H1 (cell line): ENCODE measurements at regions of chr7 and their contacts with region 1.

Region 1: DNA sequence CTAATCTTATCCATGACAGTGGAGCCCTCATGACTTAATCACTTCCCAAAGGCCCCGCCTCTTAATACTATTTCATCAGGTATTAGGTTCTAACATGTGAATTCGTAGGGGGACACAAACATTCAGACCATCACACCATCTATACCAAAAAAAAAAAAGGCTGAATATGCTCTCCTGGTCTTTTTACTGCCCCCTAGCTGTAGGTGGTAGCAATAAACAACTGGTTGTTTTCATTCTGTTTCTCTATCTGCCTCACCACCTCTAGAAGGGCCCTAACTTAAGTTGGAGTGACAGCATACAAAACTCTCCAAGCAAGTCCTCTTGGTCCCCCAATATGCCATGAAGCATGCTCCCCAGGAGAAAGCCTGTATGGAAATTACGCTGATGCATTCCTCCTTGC is 94.1 kb downstream of the GRM8 start:
- DNase-seq: no peak
- H3K4me3 ChIP-seq: no peak overlapping the region
- H3K27ac ChIP-seq: no peak overlapping the region
- H3K4me1 ChIP-seq: no peaks in the 10 kb centered on the region
- H3K27me3 ChIP-seq: peaks cover 0 to 1% (median 0%) of the 10 kb centered on the region in 4 experiments; a peak in 1 of 7 replicates
- CTCF ChIP-seq: peak in 2 of 3 experiments; percentile 46 to 72; a peak in 3 of 4 replicates
- EP300 ChIP-seq: no peak
- POLR2A ChIP-seq: no peak
- RAD21 ChIP-seq: peak; percentile 35 to 49

Region 2: DNA sequence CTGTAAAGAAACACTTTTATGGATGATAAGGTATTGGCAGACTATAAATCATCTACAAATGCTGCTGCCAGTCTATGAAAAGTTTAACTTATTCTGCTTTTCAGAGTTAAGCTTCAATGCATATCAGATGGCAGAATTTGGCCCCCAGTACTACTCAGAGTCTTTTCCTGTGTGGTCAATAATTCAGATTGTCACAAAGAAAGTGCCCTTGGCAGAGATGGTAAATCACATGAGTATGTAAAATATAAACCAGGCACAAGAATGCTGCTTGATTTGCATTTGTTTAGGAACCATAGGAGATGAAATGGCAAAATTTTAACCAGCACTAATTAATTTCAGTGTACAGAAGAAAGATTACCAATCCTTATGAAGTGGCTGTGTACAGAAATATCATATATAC is 1410.7 kb before region 1 on chr7:
- CTCF ChIA-PET with region 1: no interaction called
- POLR2A ChIA-PET with region 1: no interaction called
- DNase-seq: no peak
- H3K4me3 ChIP-seq: no peak overlapping the region
- H3K27ac ChIP-seq: no peak overlapping the region
- H3K4me1 ChIP-seq: no peaks in the 10 kb centered on the region
- H3K27me3 ChIP-seq: no peaks in the 10 kb centered on the region
- CTCF ChIP-seq: no peak
- EP300 ChIP-seq: no peak
- POLR2A ChIP-seq: no peak
- RAD21 ChIP-seq: no peak

Region 3: DNA sequence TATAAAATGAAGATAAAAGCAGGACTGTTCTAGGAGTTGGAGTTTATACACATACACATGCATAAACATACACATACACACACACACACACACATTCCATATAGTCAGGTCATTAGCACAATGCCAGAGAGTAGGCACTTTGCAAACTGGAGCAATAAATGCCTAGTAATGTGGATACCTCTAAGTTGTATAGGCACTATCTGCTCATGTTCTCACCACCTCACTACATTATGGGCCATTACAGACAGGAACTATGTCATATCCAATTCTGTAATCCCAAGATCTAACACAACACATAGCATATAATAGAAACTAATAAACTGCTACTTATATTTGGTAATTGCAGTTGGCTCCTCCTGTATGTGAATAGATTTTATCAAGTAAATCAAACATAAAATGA is 21.5 kb before region 1 on chr7:
- CTCF ChIA-PET with region 1: interaction called, 12 read pairs
- POLR2A ChIA-PET with region 1: no interaction called
- DNase-seq: no peak
- H3K4me3 ChIP-seq: no peak overlapping the region
- H3K27ac ChIP-seq: no peak overlapping the region
- H3K4me1 ChIP-seq: no peaks in the 10 kb centered on the region
- H3K27me3 ChIP-seq: no peaks in the 10 kb centered on the region
- CTCF ChIP-seq: no peak
- EP300 ChIP-seq: no peak
- POLR2A ChIP-seq: no peak
- RAD21 ChIP-seq: no peak

Region 4: DNA sequence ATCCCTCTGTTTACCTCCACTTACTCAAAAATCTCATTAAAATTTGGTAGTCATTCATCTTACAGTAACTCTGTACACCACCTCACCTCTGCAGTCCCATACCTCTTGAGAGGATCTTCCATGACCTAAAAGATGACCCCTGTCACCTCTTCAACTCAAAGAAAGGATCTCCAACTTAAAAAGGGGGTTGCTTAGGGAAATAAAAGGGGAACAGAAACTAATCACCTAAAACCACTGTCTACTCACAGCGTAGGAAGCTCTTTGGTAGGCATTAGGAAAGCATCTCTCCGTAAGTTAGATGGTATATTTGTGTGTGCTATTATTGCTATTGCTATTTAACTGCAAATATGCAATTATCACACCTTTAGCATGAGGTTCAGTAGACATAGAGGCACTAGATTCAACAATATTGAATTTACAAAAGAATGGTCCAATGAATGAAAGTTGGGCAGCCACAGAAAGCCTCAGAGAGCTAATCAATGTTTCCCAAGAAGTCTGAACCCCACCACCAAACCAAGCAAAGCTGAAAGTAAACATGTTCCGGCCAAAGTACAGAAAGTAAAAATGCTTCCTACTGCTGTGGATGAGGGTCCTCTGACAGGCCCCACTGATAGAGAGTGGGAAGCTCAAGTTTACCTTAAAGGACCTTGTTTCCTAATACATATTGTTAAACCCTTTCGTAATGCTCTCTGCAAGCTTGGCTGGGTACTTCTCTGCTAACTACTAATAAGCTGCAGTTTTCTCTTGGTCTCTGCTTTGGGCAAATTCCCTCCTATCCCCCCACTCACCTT is 11.7 kb before region 1 on chr7:
- CTCF ChIA-PET with region 1: interaction called, 10 read pairs
- POLR2A ChIA-PET with region 1: no interaction called
- DNase-seq: no peak
- H3K4me3 ChIP-seq: no peak overlapping the region
- H3K27ac ChIP-seq: no peak overlapping the region
- H3K4me1 ChIP-seq: no peaks in the 10 kb centered on the region
- H3K27me3 ChIP-seq: no peaks in the 10 kb centered on the region
- CTCF ChIP-seq: no peak
- EP300 ChIP-seq: no peak
- POLR2A ChIP-seq: no peak
- RAD21 ChIP-seq: no peak